ENCODE measurements at regions of chr10 and their contacts with region 1.

Region 1: GRCh38 chr10:96586419-96587263 is at the start of gene TM9SF3:
- DNase-seq: peak; percentile 83
- ATAC-seq: peak; percentile 87
- H3K4me3 ChIP-seq: peak within 1 kb of the TSS; percentile 78
- H3K27ac ChIP-seq: peak within 1 kb of the TSS; percentile 95
- H3K4me1 ChIP-seq: peaks cover 11% of the 10 kb centered on the region
- H3K27me3 ChIP-seq: no peaks in the 10 kb centered on the region
- CTCF ChIP-seq: no peak
- POLR2A ChIP-seq: peak; percentile 91
- RAD21 ChIP-seq: no peak
- total RNA-seq, gene TM9SF3: 61.8 and 190 TPM in 2 replicates

Region 2: DNA sequence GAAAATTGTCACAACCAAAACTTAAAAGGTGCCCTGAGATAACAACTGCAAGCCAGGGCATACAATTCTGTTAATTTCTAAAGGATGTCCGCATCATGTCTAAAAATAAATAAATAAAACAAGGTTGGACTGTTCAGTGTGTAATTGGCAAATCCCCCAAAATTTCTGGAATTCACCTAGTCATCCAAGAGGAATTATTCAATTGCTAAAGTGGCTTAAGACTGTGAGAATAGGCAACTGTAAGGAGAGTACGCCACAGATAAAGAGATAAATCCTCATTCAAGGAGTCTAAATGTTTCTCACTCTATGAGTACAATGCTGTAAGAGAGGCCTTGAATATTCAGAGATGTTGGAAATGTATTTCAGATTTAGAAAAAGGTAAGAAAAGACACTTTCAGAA is 96.4 kb after region 1 on chr10:
- CTCF ChIA-PET with region 1: no interaction called
- POLR2A ChIA-PET with region 1: no interaction called
- dilution Hi-C with region 1: no loop called
- in situ Hi-C with region 1: no loop called
- intact Hi-C with region 1: loop called (anchors 5 kb)
- DNase-seq: peak; percentile 84
- ATAC-seq: peak; percentile 88
- H3K4me3 ChIP-seq: no peak overlapping the region
- H3K27ac ChIP-seq: no peak overlapping the region
- H3K4me1 ChIP-seq: peaks cover 4% of the 10 kb centered on the region; the same call in 1 of the 2 replicates
- H3K27me3 ChIP-seq: no peaks in the 10 kb centered on the region
- CTCF ChIP-seq: no peak
- POLR2A ChIP-seq: no peak
- RAD21 ChIP-seq: no peak